ENCODE measurements at regions of chr18 and their contacts with region 1.

Region 1: DNA sequence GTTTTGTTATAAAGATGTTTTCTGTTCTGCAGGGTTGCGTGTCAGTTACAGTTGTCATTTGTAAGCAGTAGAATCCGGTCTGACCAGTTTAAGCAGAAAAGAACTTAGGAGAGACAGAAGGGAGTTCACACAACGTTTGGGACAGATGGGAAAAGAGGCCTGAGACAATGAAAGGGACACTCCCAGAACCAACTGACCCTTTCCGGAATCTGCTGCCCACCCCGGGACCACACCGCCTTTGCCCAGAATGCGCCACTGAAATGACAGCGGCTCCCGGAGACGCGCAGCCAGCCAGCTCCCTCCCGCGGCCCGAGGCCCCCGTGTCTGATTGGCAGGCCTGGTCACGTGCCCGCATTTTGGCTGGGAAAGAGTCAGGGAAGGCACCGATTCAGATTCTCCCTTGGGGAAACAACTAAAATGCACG is 244.6 kb downstream of the BCL2 start:
- DNase-seq: peak; percentile 30 to 72 (median 54)
- H3K4me3 ChIP-seq: peak overlapping the region; percentile 35 to 76 (median 52)
- H3K4me3 Mint-ChIP-seq: peak overlapping the region; percentile 81 to 94
- H3K27ac ChIP-seq: peak overlapping the region; percentile 60 to 83
- H3K27ac Mint-ChIP-seq: peak overlapping the region; percentile 62 to 91 (median 85)
- H3K4me1 ChIP-seq: peaks cover 13 to 20% of the 10 kb centered on the region in 2 donors
- H3K4me1 Mint-ChIP-seq: peaks cover 27% of the 10 kb centered on the region
- H3K27me3 ChIP-seq: no peaks in the 10 kb centered on the region
- H3K27me3 Mint-ChIP-seq: no peaks in the 10 kb centered on the region
- CTCF ChIP-seq: no peak

Region 2: DNA sequence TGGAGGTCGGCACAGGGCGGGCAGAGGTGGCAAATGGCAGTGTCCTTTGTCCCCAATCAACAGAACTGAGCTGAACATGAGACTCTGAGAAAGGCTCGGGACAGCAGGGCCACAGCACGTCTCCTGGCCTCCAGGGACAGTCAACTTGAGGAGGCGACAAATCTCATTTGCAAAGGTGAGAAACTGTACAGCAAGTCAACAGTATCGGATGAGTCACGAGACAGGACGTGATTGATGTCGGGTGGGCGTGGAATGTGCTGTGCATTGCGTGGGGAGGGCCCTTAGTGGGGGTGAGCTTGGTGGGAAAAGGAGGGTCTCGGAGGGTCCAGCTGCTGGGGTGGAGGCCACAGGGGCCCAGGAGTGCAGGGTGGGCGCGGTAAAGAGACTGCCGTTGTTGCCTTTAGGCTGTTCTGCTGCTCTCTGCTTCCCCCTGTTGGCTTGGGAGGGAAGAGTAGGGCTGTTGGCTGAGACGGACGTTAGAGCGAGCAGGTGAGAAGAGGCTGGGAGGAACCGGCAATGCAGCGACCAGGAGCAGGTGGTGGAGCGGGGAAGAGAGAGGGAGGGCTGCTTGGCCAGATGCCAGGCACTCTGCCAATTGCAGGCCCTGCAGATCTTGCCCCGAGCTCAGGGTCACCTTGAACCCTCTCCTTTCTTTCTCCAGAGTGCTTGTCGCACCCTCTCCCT is 80.3 kb after region 1 on chr18:
- intact Hi-C with region 1: loop called in 1 of 2 experiments (anchors 10 kb)
- DNase-seq: peak; percentile 40 to 52 (median 47)
- H3K4me3 ChIP-seq: peak overlapping the region; percentile 7 to 68 (median 9)
- H3K4me3 Mint-ChIP-seq: peak overlapping the region; percentile 81 to 92
- H3K27ac ChIP-seq: no peak overlapping the region
- H3K27ac Mint-ChIP-seq: peak overlapping the region in 3 of 7 donors; percentile 30 to 88 (median 82)
- H3K4me1 ChIP-seq: peaks cover 8 to 10% of the 10 kb centered on the region in 2 donors
- H3K4me1 Mint-ChIP-seq: peaks cover 11% of the 10 kb centered on the region
- H3K27me3 ChIP-seq: no peaks in the 10 kb centered on the region
- H3K27me3 Mint-ChIP-seq: peaks cover 0 to 4% (median 2%) of the 10 kb centered on the region in 3 donors
- CTCF ChIP-seq: peak; percentile 88